Activated T-helper 1 cell treated with anti-CD3 and anti-CD28 coated beads, Interleukin-12 subunit alpha, Interleukin-12 subunit beta, Interleukin-2, Interleukin-4 antibody, amounts not matched to agents 30 ng/mL and 10 ng/mL and 1 ng/mL, durations not matched to agents 14 hours and 24 hours and 36 hours (primary cell): ENCODE measurements at regions of chr20 and their contacts with region 1.

Region 1: GRCh38 chr20:64062596-64063388 is at the start of gene TCEA2:
- DNase-seq: peak; percentile 94
- H3K4me3 Mint-ChIP-seq: peak within 1 kb of the TSS; percentile 93
- H3K27ac Mint-ChIP-seq: peak within 1 kb of the TSS; percentile 95
- H3K4me1 Mint-ChIP-seq: peaks cover 56% of the 10 kb centered on the region
- H3K27me3 Mint-ChIP-seq: no peaks in the 10 kb centered on the region
- total RNA-seq, gene TCEA2: 33.8 TPM in 2 replicates

Region 2: GRCh38 chr20:63272584-63273579 is 789.9 kb before region 1 on chr20 and contains the start of gene ARFGAP1:
- intact Hi-C with region 1: loop called (anchors 5 kb)
- DNase-seq: peak; percentile 86
- H3K4me3 Mint-ChIP-seq: peak within 1 kb of the TSS; percentile 98
- H3K27ac Mint-ChIP-seq: peak within 1 kb of the TSS; percentile 89
- H3K4me1 Mint-ChIP-seq: peaks cover 23% of the 10 kb centered on the region
- H3K27me3 Mint-ChIP-seq: peaks cover 3% of the 10 kb centered on the region
- total RNA-seq, gene ARFGAP1: 102 and 107 TPM in 2 replicates

Region 3: GRCh38 chr20:63553227-63553932 is 509.4 kb before region 1 on chr20:
- intact Hi-C with region 1: loop called (anchors 1 kb)
- DNase-seq: peak; percentile 86
- H3K4me3 Mint-ChIP-seq: peak overlapping the region; percentile 63
- H3K27ac Mint-ChIP-seq: peak overlapping the region; percentile 55
- H3K4me1 Mint-ChIP-seq: peaks cover 9% of the 10 kb centered on the region
- H3K27me3 Mint-ChIP-seq: peaks cover 19% of the 10 kb centered on the region

Region 4: GRCh38 chr20:63785691-63786131 is 277.1 kb before region 1 on chr20:
- intact Hi-C with region 1: loop called (anchors 5 kb)
- DNase-seq: no peak
- H3K4me3 Mint-ChIP-seq: no peak overlapping the region
- H3K27ac Mint-ChIP-seq: no peak overlapping the region
- H3K4me1 Mint-ChIP-seq: peaks cover 7% of the 10 kb centered on the region
- H3K27me3 Mint-ChIP-seq: peaks cover 8% of the 10 kb centered on the region

Region 5: GRCh38 chr20:63873477-63873971 is 189.3 kb before region 1 on chr20:
- intact Hi-C with region 1: no loop called
- DNase-seq: peak; percentile 48
- H3K4me3 Mint-ChIP-seq: peak overlapping the region; percentile 40
- H3K27ac Mint-ChIP-seq: peak overlapping the region; percentile 98
- H3K4me1 Mint-ChIP-seq: peaks cover 8% of the 10 kb centered on the region
- H3K27me3 Mint-ChIP-seq: no peaks in the 10 kb centered on the region

Region 6: GRCh38 chr20:63980806-63981728 is 81.7 kb before region 1 on chr20 and contains the start of gene PRPF6:
- intact Hi-C with region 1: loop called (anchors 1 kb)
- DNase-seq: peak; percentile 94
- H3K4me3 Mint-ChIP-seq: peak within 1 kb of the TSS; percentile 98
- H3K27ac Mint-ChIP-seq: peak within 1 kb of the TSS; percentile 99
- H3K4me1 Mint-ChIP-seq: peaks cover 64% of the 10 kb centered on the region
- H3K27me3 Mint-ChIP-seq: no peaks in the 10 kb centered on the region
- total RNA-seq, gene PRPF6: 82.3 and 83.6 TPM in 2 replicates

Region 7: GRCh38 chr20:64119681-64120341 is 57.0 kb after region 1 on chr20:
- intact Hi-C with region 1: loop called (anchors 1 kb)
- DNase-seq: no peak
- H3K4me3 Mint-ChIP-seq: peak overlapping the region; percentile 51
- H3K27ac Mint-ChIP-seq: peak overlapping the region; percentile 44
- H3K4me1 Mint-ChIP-seq: peaks cover 10% of the 10 kb centered on the region
- H3K27me3 Mint-ChIP-seq: peaks cover 13% of the 10 kb centered on the region